ENCODE measurements at regions of chr13 and their contacts with region 1.

Region 1: DNA sequence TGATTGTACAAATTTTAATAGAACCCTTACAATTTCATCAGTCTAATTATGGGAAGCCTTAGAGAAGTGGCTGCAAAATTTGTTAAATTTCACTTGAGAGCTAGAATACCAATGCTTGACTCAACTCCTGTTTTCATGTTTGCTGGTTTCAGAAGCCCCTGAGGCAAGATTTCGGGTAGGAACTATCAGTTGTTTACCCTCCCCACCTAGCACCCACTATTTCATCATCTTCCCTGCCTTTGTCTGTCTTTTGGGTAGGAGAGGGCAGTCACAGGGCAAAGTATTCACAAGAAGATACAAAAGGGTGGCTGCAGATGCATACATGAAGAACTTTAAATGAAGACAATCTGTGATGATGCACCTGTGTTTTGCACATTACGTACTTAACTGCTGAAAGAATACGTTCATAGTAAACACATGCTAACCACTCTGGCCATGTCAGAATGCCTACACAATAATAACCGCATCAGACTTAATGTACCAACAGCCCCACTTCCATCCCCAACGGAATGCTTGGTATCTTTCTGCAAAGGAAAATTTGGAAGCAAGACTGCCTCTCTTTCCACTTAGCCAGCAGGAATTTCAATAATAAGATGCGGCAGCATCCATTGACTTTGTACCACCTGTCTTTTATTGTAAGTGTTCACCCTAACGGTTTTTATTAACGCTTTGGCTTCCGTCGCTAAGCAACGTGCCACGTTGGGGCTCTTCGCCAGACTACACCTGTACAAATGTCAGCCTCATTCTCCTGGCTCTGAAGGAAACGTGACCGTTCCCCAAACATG is 30.4 kb downstream of the TPT1 start:
- DNase-seq: no peak
- ATAC-seq: no peak
- H3K4me3 ChIP-seq: no peak overlapping the region
- H3K27ac ChIP-seq: no peak overlapping the region
- H3K4me1 ChIP-seq: peaks cover 5 to 10% of the 10 kb centered on the region in 2 experiments; a peak in 3 of 5 replicates
- H3K27me3 ChIP-seq: no peaks in the 10 kb centered on the region
- CTCF ChIP-seq: no peak
- EP300 ChIP-seq: no peak
- POLR2A ChIP-seq: no peak
- RAD21 ChIP-seq: no peak

Region 2: GRCh38 chr13:44969551-44970484 is 340.7 kb before region 1 on chr13:
- CTCF ChIA-PET with region 1: interaction called, 9 read pairs
- POLR2A ChIA-PET with region 1: no interaction called
- in situ Hi-C with region 1: no loop called
- intact Hi-C with region 1: loop called (anchors 2 kb)
- DNase-seq: peak in 2 of 4 experiments; percentile 14 to 28
- ATAC-seq: peak; percentile 64; the same call in 1 of the 3 replicates
- H3K4me3 ChIP-seq: no peak overlapping the region
- H3K27ac ChIP-seq: no peak overlapping the region
- H3K4me1 ChIP-seq: peaks cover 0 to 3% of the 10 kb centered on the region in 2 experiments; a peak in 1 of 5 replicates
- H3K27me3 ChIP-seq: no peaks in the 10 kb centered on the region
- CTCF ChIP-seq: peak; percentile 28 to 68 (median 48); a peak in 4 of 6 replicates
- EP300 ChIP-seq: no peak
- POLR2A ChIP-seq: no peak
- RAD21 ChIP-seq: peak; percentile 62 to 72

Region 3: DNA sequence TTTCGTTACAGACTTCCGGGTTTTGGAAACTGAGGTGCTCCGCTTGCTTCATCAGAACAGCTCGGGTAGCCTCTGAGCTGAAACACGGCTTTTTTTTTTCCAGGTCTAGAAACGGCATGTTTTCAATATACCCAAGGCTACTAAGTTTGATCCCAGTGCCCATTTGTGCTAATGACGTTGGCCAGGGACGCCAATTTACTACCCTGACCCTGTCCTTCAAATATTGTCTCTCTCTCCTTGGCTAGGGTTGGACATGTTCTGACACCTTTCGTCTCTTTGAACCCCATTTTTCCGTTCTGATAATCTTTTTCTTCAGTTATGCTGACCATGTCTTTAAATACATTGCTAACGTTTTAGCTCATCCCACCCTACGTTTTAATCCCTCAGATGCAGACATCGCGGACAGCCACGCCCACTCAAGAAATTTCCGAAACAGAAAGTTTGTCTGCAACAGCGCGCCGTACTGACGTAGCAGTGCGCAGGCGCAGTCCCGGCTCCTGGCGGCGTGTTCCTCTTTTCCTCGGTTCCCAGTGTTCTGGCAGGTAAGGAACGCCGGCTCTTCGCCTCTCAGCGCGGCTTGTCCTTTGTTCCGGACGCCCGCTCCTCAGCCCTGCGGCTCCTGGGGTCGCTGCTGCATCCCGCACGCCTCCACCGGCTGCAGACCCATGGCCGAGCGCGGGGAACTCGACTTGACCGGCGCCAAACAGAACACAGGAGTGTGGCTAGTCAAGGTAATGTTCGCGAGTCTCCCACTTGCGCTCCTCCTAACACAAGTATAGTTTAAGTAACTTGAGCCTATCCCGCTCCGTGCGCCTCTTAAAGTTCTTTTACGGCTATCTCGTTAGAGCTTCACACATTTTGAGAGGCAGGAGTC is 190.3 kb before region 1 on chr13 and contains the start of gene GTF2F2:
- CTCF ChIA-PET with region 1: no interaction called
- POLR2A ChIA-PET with region 1: no interaction called
- in situ Hi-C with region 1: no loop called
- intact Hi-C with region 1: loop called (anchors 5 kb)
- DNase-seq: peak; percentile 84 to 88 (median 85)
- ATAC-seq: peak; percentile 84
- H3K4me3 ChIP-seq: peak within 1 kb of the TSS; percentile 87
- H3K27ac ChIP-seq: peak within 1 kb of the TSS; percentile 87
- H3K4me1 ChIP-seq: peaks cover 7 to 14% of the 10 kb centered on the region in 2 experiments; a peak in 3 of 5 replicates
- H3K27me3 ChIP-seq: no peaks in the 10 kb centered on the region
- CTCF ChIP-seq: no peak
- EP300 ChIP-seq: no peak
- POLR2A ChIP-seq: peak; percentile 86
- RAD21 ChIP-seq: no peak
- polyA plus RNA-seq, gene GTF2F2: 19.7 to 22.6 TPM

Measured in K562 (cell line).